ENCODE measurements at regions of chr4 and their contacts with region 1.

Region 1: GRCh38 chr4:18390655-18391353 is 369.2 kb upstream of the LCORL start:
- DNase-seq: no peak
- ATAC-seq: no peak
- H3K4me3 ChIP-seq: no peak overlapping the region
- H3K27ac ChIP-seq: no peak overlapping the region
- H3K4me1 ChIP-seq: no peaks in the 10 kb centered on the region
- H3K27me3 ChIP-seq: no peaks in the 10 kb centered on the region
- CTCF ChIP-seq: no peak
- POLR2A ChIP-seq: no peak

Region 2: GRCh38 chr4:17544205-17544604 is 846.6 kb before region 1 on chr4:
- in situ Hi-C with region 1: loop called in 1 of 4 experiments (anchors 25 kb)
- intact Hi-C with region 1: no loop called
- DNase-seq: no peak
- ATAC-seq: no peak
- H3K4me3 ChIP-seq: no peak overlapping the region
- H3K27ac ChIP-seq: no peak overlapping the region
- H3K4me1 ChIP-seq: no peaks in the 10 kb centered on the region
- H3K27me3 ChIP-seq: no peaks in the 10 kb centered on the region
- CTCF ChIP-seq: no peak
- POLR2A ChIP-seq: no peak

Region 3: GRCh38 chr4:18250564-18250963 is 140.2 kb before region 1 on chr4:
- in situ Hi-C with region 1: no loop called
- intact Hi-C with region 1: no loop called
- DNase-seq: no peak
- ATAC-seq: no peak
- H3K4me3 ChIP-seq: no peak overlapping the region
- H3K27ac ChIP-seq: no peak overlapping the region
- H3K4me1 ChIP-seq: no peaks in the 10 kb centered on the region
- H3K27me3 ChIP-seq: no peaks in the 10 kb centered on the region
- CTCF ChIP-seq: no peak
- POLR2A ChIP-seq: no peak

Region 4: DNA sequence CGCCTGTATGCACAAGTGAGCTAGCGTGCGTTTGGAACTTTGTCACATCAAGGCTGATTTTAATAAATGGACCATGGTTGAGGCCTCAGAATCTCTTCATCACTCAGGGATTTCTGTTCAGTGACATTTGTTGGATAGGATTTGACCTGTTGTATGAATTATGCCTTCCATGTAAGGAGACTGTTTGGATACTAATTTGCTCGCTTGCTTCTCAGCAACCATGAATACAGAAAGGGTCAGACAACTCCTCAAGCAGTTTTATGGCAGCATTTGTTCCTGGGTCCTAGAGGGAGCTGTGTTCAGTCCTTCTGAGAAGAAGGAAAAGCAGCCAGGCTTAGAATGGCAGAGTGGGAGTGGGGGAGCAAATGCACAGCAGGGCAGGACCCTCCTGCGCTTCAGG is 99.5 kb before region 1 on chr4:
- in situ Hi-C with region 1: no loop called
- intact Hi-C with region 1: no loop called
- DNase-seq: no peak
- ATAC-seq: no peak
- H3K4me3 ChIP-seq: no peak overlapping the region
- H3K27ac ChIP-seq: no peak overlapping the region
- H3K4me1 ChIP-seq: no peaks in the 10 kb centered on the region
- H3K27me3 ChIP-seq: no peaks in the 10 kb centered on the region
- CTCF ChIP-seq: no peak
- POLR2A ChIP-seq: no peak